ENCODE measurements at regions of chr22 and their contacts with region 1.

Region 1: DNA sequence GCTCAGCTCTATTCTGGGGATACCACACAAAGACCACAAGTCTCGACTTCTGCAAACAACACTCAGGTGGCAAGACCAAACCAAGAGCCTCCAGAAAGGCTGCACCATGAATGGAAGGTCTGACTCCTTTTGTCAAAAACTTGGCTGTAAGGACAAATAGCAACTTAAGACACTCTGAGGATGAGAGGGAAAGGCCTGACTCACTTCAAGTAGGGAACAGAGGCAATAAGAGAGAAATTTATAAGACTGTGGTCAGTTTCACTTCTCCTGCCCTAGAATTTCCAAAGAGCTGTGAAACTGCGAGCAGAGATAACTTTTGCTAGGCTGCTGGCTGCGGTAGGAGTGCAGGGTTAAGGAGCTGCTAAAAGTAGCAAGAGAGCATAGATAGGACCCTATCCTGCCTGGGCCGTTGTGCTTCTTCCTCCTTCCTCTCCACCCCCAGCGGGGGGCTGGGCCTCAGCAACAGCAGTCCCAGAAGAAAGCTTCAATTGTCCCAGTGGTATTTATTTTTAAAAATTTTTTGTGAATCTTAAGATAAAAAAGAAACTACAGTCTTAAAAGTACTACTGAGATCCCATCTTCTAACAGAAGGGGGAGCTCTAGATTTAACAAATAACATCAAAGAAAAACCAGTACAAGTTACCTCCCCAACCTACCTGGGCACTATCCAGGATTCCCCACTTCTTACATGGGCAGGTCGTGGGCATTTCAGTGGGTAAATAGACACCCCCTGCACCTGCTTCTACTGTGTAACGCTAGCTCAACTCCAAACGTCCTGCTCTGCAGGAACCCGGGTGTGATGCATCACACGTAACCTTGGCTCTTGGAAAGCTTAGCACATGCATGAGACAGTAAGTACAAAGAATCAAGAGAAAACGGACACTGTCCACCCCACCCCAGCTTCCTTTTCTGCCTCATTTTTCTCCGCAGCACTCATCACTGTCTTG is 66.4 kb downstream of the SGSM3 start:
- DNase-seq: peak; percentile 34 to 44
- H3K4me3 ChIP-seq: no peak overlapping the region
- H3K27ac ChIP-seq: no peak overlapping the region
- H3K4me1 ChIP-seq: peaks cover 3% of the 10 kb centered on the region; the same call in 1 of the 2 replicates
- H3K27me3 ChIP-seq: no peaks in the 10 kb centered on the region
- CTCF ChIP-seq: peak; percentile 94

Region 2: DNA sequence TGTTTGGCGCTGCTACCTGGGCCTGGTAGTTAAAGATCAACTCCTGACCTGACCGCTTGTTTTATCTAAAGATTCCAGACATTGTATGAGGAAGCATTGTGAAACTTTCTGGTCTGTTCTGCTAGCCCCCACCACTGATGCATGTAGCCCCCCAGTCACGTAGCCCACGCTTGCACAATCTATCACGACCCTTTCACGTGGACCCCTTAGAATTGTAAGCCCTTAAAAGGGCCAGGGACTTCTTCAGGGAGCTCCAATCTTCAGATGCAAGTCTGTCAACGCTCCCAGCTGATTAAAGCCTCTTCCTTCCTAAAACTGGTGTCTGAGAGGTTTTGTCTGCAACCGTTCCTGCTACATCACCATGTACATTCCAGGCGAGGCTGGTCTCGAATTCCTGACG is 1381.1 kb before region 1 on chr22:
- CTCF ChIA-PET with region 1: interaction called, 10 read pairs
- POLR2A ChIA-PET with region 1: no interaction called
- intact Hi-C with region 1: no loop called
- DNase-seq: no peak
- H3K4me3 ChIP-seq: no peak overlapping the region
- H3K27ac ChIP-seq: no peak overlapping the region
- H3K4me1 ChIP-seq: peaks cover 21% of the 10 kb centered on the region
- H3K27me3 ChIP-seq: no peaks in the 10 kb centered on the region
- CTCF ChIP-seq: no peak

Region 3: DNA sequence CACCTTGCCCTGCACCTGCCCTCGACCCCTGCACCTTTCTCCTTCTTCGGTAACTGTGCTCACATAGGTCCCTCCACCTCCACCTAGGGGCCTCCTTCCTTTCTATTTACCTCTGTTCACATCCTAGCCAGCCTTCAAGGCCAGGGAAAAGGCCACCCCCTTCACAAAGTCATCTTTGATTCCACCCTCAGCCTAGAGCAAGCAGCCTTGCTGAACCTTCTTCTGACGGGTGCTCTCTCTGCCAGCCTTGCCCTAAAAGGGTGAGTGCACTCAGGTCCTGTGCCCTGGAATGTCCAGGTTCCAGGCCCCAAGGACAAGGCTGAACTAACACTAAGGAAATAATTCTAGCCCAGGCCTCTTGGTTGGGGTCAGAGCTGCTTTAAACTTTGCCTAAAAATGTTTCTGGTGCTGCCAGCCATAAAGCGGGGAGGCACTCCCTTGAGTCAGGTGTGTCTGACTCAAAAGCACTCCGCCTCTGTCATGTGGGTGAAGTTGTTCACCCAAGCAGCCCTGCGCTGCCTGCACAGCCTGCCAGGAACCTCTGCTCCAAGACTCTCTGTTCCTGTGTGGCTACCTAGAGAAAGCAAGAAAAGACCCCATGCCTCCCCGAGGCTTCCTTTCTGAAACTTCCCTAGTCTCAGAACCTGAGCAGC is 451.3 kb before region 1 on chr22:
- CTCF ChIA-PET with region 1: no interaction called
- POLR2A ChIA-PET with region 1: no interaction called
- intact Hi-C with region 1: no loop called
- DNase-seq: no peak
- H3K4me3 ChIP-seq: no peak overlapping the region
- H3K27ac ChIP-seq: no peak overlapping the region
- H3K4me1 ChIP-seq: no peaks in the 10 kb centered on the region
- H3K27me3 ChIP-seq: peaks cover 68% of the 10 kb centered on the region
- CTCF ChIP-seq: no peak

Region 4: GRCh38 chr22:40334899-40335298 is 101.9 kb before region 1 on chr22:
- CTCF ChIA-PET with region 1: interaction called, 10 read pairs
- POLR2A ChIA-PET with region 1: no interaction called
- intact Hi-C with region 1: no loop called
- DNase-seq: no peak
- H3K4me3 ChIP-seq: no peak overlapping the region
- H3K27ac ChIP-seq: no peak overlapping the region
- H3K4me1 ChIP-seq: no peaks in the 10 kb centered on the region
- H3K27me3 ChIP-seq: no peaks in the 10 kb centered on the region
- CTCF ChIP-seq: no peak

Region 5: DNA sequence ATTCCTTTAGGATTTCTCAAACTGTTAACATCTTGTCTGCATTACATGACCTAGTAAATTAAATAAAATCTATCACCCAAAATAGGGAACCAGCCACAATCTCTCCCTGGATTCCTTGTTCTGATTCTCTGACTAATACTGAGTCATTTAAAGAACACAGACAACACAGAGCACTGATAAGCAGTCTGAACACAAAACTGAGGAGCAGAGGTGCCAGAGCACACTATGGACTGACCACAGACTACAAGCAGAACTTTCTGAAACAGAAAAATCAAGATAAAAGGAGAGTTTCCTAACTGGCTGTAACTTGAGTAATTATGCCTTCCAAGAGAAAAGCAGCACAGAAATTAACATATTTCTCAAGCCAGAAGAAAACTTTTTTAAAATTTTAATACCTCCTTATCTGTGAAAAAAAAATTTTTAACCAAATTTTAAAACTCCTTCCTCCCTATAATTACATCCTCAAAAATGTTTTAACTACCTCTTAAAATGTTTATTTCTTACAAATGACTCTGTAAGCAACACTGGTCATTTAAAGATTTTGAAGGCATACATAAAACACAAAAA is 62.5 kb after region 1 on chr22:
- CTCF ChIA-PET with region 1: no interaction called
- POLR2A ChIA-PET with region 1: no interaction called
- intact Hi-C with region 1: loop called (anchors 5 kb)
- DNase-seq: peak; percentile 49 to 98
- H3K4me3 ChIP-seq: peak overlapping the region; percentile 31; the same call in 1 of the 2 replicates
- H3K27ac ChIP-seq: peak overlapping the region; percentile 96
- H3K4me1 ChIP-seq: peaks cover 40% of the 10 kb centered on the region
- H3K27me3 ChIP-seq: no peaks in the 10 kb centered on the region
- CTCF ChIP-seq: no peak

Region 6: DNA sequence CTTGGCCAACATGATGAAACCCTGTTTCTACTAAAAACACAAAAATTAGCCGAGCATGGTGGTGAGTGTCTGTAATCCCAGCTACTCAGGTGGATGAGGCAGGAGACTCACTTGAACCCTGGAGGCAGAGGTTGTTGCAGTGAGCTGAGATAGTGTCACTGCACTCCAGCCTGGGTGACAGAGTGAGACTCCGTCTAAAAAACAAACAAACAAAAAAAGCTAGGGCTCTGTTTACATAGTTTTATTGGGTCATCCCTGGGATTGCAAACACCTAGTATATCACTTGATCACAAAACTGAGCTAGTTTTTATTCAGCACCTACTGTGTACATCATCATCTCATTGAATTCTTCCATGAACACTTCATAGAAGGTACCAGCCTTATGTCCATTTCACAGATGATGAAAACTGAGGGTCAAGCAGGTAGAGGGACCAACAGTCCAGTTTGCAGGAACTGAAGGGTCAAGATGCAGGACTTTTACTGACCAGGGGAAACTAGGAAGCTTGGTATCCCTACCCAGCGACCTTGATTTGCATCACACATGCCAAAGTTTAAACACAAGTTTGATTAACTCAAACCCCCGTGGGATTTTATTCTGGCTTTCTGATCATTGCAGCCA is 208.9 kb after region 1 on chr22:
- CTCF ChIA-PET with region 1: interaction called, 5 read pairs
- POLR2A ChIA-PET with region 1: interaction called, 10 read pairs
- intact Hi-C with region 1: loop called (anchors 1 kb)
- DNase-seq: no peak
- H3K4me3 ChIP-seq: no peak overlapping the region
- H3K27ac ChIP-seq: no peak overlapping the region
- H3K4me1 ChIP-seq: peaks cover 13% of the 10 kb centered on the region
- H3K27me3 ChIP-seq: no peaks in the 10 kb centered on the region
- CTCF ChIP-seq: no peak

Region 7: DNA sequence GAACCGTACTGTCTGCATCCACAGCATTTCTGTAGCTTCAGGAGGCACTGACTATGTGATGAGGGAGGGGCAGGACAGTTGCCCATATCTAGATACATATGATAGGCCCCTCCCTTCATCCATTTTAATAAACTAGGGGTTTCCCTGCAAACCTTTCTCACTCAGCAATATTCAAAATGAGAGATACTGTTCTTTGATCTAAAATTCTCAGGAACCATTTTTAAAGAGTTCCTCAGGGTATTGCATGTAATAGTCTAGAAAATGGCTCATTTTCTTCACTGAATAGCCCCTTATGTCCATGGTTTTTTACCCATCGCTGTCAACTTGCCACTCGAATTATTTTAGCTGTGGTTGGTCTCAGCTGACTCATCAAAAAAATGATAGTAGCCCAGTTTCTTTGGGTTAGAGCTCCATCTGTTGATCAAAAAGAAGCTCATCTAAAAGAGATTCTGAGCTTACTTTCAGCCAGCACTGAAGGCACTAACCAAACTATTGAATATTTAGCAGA is 462.1 kb after region 1 on chr22:
- CTCF ChIA-PET with region 1: interaction called, 4 read pairs
- POLR2A ChIA-PET with region 1: no interaction called
- intact Hi-C with region 1: loop called (anchors 5 kb)
- DNase-seq: peak in 1 of 2 experiments; percentile 67
- H3K4me3 ChIP-seq: no peak overlapping the region
- H3K27ac ChIP-seq: no peak overlapping the region
- H3K4me1 ChIP-seq: no peaks in the 10 kb centered on the region
- H3K27me3 ChIP-seq: no peaks in the 10 kb centered on the region
- CTCF ChIP-seq: peak; percentile 77

Measured in PC-9 (cell line).